CD14-positive monocyte (primary cell): ENCODE measurements at regions of chr15 and their contacts with region 1.

Region 1: GRCh38 chr15:44426975-44427755 is at the start of gene CTDSPL2:
- DNase-seq: peak; percentile 90 to 93 (median 91)
- H3K4me3 ChIP-seq: peak within 1 kb of the TSS; percentile 83 to 100 (median 96)
- H3K4me3 Mint-ChIP-seq: peak within 1 kb of the TSS; percentile 96 to 98
- H3K27ac ChIP-seq: peak within 1 kb of the TSS; percentile 92 to 99
- H3K27ac Mint-ChIP-seq: peak within 1 kb of the TSS; percentile 98 to 100 (median 99)
- H3K4me1 ChIP-seq: peaks cover 26 to 41% of the 10 kb centered on the region in 2 donors
- H3K4me1 Mint-ChIP-seq: peaks cover 36% of the 10 kb centered on the region
- H3K27me3 ChIP-seq: no peaks in the 10 kb centered on the region
- H3K27me3 Mint-ChIP-seq: peaks cover 0 to 3% (median 2%) of the 10 kb centered on the region in 3 donors
- CTCF ChIP-seq: no peak
- polyA plus RNA-seq, gene CTDSPL2: 18.1 to 31.4 (median 24.5) TPM

Region 2: GRCh38 chr15:44296625-44297524 is 130.3 kb before region 1 on chr15:
- intact Hi-C with region 1: loop called in 1 of 2 experiments (anchors 5 kb)
- DNase-seq: peak; percentile 77 to 92 (median 91)
- H3K4me3 ChIP-seq: peak overlapping the region in 1 of 3 experiments; percentile 40
- H3K4me3 Mint-ChIP-seq: peak overlapping the region in 1 of 2 donors; percentile 77
- H3K27ac ChIP-seq: peak overlapping the region; percentile 48 to 55
- H3K27ac Mint-ChIP-seq: peak overlapping the region; percentile 75 to 95 (median 91)
- H3K4me1 ChIP-seq: peaks cover 45 to 55% of the 10 kb centered on the region in 2 donors
- H3K4me1 Mint-ChIP-seq: peaks cover 44% of the 10 kb centered on the region
- H3K27me3 ChIP-seq: no peaks in the 10 kb centered on the region
- H3K27me3 Mint-ChIP-seq: peaks cover 0 to 3% (median 0%) of the 10 kb centered on the region in 3 donors
- CTCF ChIP-seq: no peak

Region 3: GRCh38 chr15:44516436-44516835 is 89.3 kb after region 1 on chr15:
- intact Hi-C with region 1: no loop called
- DNase-seq: no peak
- H3K4me3 ChIP-seq: no peak overlapping the region
- H3K4me3 Mint-ChIP-seq: no peak overlapping the region
- H3K27ac ChIP-seq: no peak overlapping the region
- H3K27ac Mint-ChIP-seq: no peak overlapping the region
- H3K4me1 ChIP-seq: no peaks in the 10 kb centered on the region
- H3K4me1 Mint-ChIP-seq: no peaks in the 10 kb centered on the region
- H3K27me3 ChIP-seq: no peaks in the 10 kb centered on the region
- H3K27me3 Mint-ChIP-seq: no peaks in the 10 kb centered on the region
- CTCF ChIP-seq: no peak

Region 4: GRCh38 chr15:44536962-44537734 is 110.0 kb after region 1 on chr15 and contains the start of gene EIF3J:
- intact Hi-C with region 1: loop called in 1 of 2 experiments (anchors 5 kb)
- DNase-seq: peak; percentile 97 to 98 (median 97)
- H3K4me3 ChIP-seq: peak within 1 kb of the TSS; percentile 86 to 95 (median 90)
- H3K4me3 Mint-ChIP-seq: peak within 1 kb of the TSS; percentile 85 to 93
- H3K27ac ChIP-seq: peak within 1 kb of the TSS; percentile 94 to 96
- H3K27ac Mint-ChIP-seq: peak within 1 kb of the TSS; percentile 93 to 98 (median 96)
- H3K4me1 ChIP-seq: peaks cover 12 to 27% of the 10 kb centered on the region in 2 donors
- H3K4me1 Mint-ChIP-seq: peaks cover 32% of the 10 kb centered on the region
- H3K27me3 ChIP-seq: no peaks in the 10 kb centered on the region
- H3K27me3 Mint-ChIP-seq: no peaks in the 10 kb centered on the region
- CTCF ChIP-seq: no peak
- polyA plus RNA-seq, gene EIF3J: 9.7 to 20.1 (median 13.5) TPM

Region 5: DNA sequence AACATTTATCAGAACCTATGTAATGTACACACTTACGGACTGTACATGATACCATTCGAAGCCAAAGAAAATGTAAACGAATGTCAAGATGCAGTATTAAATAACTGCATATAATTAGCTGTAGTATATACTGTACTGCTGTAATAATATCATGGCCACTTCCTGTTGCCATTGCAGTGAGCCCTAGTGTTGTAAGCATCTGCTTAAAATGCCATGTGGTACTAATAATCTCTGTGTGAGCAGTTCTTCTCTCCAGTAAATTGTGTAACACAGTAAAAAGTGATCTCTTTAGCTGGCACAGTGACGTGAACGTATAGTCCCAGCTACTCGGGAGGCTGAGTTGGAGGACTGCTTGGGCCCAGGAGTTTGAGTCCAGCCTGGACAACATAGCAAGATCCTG is 227.7 kb after region 1 on chr15:
- intact Hi-C with region 1: no loop called
- DNase-seq: peak in 1 of 3 donors; percentile 12
- H3K4me3 ChIP-seq: no peak overlapping the region
- H3K4me3 Mint-ChIP-seq: no peak overlapping the region
- H3K27ac ChIP-seq: peak overlapping the region in 1 of 2 donors; percentile 44
- H3K27ac Mint-ChIP-seq: peak overlapping the region in 4 of 7 donors; percentile 20 to 79 (median 52)
- H3K4me1 ChIP-seq: peaks cover 0 to 3% of the 10 kb centered on the region in 2 donors
- H3K4me1 Mint-ChIP-seq: peaks cover 10% of the 10 kb centered on the region
- H3K27me3 ChIP-seq: no peaks in the 10 kb centered on the region
- H3K27me3 Mint-ChIP-seq: peaks cover 0 to 1% (median 0%) of the 10 kb centered on the region in 3 donors
- CTCF ChIP-seq: no peak